ENCODE measurements at regions of chr12 and their contacts with region 1.

Region 1: DNA sequence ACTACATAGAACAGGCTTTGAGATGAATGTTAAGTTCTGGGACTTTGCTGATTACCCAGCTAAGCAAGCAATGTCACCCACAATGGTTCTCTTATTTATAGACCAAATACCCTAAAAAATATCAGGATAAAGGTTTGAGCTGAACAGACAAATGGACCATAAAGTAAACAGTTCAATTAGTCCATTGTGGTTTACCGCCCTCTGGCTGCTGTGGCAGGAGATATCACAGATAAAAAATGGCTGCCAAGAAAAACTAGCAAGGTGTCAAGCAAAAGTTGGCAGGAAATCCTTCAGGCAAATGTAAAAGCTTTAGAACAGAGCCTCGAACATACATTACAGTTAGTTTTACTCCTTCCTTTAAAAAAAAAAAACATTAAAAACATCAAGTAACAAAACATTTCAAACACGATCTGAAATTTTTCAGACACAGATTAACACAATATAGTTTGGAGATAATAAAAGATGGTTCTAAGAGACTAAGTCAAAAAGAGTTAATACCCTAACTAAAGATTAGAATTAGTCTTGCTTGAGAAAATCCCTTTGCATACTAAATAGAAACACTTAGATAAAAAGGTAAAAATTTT is 41.3 kb downstream of the MED13L start:
- DNase-seq: peak; percentile 75
- ATAC-seq: peak; percentile 82
- H3K4me3 Mint-ChIP-seq: no peak overlapping the region
- H3K27ac Mint-ChIP-seq: peak overlapping the region; percentile 65
- H3K4me1 Mint-ChIP-seq: peaks cover 23% of the 10 kb centered on the region
- H3K27me3 Mint-ChIP-seq: no peaks in the 10 kb centered on the region

Region 2: DNA sequence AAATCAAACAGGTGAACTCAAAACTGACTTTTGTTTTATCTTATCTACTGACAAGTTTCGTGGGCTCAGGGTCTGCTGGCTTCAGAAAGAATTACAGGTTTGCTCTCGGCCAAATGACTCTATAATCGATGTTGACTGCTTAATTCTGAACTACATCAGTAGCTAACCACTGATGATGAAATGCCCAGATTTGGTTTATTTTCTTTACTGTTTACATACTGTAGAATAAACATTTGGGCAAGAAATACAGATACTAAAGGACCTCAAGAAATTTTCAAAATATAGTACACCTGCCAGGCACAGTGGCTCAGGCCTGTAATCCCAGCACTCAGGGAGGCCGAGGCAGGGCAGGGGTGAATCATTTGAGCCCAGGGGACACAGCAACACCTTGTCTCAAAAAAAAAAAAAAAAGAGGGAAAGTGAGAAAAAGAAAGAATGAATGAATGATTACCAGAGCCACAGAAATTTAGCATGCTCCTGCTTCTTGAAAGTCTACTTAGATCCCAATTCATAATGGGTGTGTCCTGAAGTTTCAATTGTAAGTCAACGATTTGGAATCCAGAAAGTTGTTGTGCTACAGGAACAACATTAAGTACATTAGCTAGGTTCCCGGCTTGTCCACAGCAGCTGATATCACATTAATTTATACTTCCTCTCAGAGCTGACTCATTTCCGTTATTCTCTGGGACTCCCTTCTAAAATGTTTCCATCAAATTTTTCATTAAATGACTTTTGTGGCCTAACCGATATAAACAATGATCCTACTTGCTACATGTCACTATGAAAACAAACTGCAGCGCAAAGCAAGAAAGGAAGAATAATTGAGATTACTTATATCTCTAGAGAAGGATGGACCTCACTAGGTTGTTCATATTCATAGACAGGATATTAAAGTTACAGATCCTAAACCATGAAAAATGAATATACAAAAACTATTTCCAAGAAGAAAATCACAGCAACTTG is 93.0 kb before region 1 on chr12:
- CTCF ChIA-PET with region 1: interaction called, 16 read pairs
- DNase-seq: no peak
- ATAC-seq: peak; percentile 78
- H3K4me3 Mint-ChIP-seq: peak overlapping the region; percentile 19
- H3K27ac Mint-ChIP-seq: peak overlapping the region; percentile 66
- H3K4me1 Mint-ChIP-seq: peaks cover 47% of the 10 kb centered on the region
- H3K27me3 Mint-ChIP-seq: no peaks in the 10 kb centered on the region

Region 3: DNA sequence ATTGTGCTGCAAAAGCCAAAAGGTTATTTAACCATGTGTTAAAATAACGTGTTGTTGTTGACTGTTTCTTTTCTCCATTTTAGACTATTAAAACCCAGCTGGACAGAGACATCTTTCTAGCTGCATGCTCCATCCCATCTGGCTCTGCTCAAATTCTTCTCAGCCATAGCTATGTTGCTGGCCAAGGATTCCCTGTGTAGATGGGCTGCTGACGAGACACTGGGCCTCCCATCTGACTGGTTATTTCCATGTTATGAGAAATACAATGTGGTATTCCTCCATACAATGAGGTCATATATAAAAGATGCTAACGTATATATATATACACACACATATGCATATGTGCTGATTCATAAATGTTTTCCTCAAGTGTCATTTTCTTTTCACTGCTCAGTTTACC is 11.1 kb after region 1 on chr12:
- CTCF ChIA-PET with region 1: interaction called, 11 read pairs
- DNase-seq: no peak
- ATAC-seq: no peak
- H3K4me3 Mint-ChIP-seq: no peak overlapping the region
- H3K27ac Mint-ChIP-seq: no peak overlapping the region
- H3K4me1 Mint-ChIP-seq: peaks cover 35% of the 10 kb centered on the region
- H3K27me3 Mint-ChIP-seq: no peaks in the 10 kb centered on the region

Region 4: GRCh38 chr12:116773276-116773731 is 537.1 kb after region 1 on chr12:
- CTCF ChIA-PET with region 1: no interaction called
- DNase-seq: no peak
- ATAC-seq: no peak
- H3K4me3 Mint-ChIP-seq: no peak overlapping the region
- H3K27ac Mint-ChIP-seq: no peak overlapping the region
- H3K4me1 Mint-ChIP-seq: peaks cover 5% of the 10 kb centered on the region
- H3K27me3 Mint-ChIP-seq: no peaks in the 10 kb centered on the region